Activated CD8-positive, alpha-beta T cell treated with anti-CD3 and anti-CD28 coated beads, Interleukin-2, amount 10 ng/mL, durations not matched to agents 7 days and 5 days (primary cell): ENCODE measurements at regions of chr3 and their contacts with region 1.

Region 1: DNA sequence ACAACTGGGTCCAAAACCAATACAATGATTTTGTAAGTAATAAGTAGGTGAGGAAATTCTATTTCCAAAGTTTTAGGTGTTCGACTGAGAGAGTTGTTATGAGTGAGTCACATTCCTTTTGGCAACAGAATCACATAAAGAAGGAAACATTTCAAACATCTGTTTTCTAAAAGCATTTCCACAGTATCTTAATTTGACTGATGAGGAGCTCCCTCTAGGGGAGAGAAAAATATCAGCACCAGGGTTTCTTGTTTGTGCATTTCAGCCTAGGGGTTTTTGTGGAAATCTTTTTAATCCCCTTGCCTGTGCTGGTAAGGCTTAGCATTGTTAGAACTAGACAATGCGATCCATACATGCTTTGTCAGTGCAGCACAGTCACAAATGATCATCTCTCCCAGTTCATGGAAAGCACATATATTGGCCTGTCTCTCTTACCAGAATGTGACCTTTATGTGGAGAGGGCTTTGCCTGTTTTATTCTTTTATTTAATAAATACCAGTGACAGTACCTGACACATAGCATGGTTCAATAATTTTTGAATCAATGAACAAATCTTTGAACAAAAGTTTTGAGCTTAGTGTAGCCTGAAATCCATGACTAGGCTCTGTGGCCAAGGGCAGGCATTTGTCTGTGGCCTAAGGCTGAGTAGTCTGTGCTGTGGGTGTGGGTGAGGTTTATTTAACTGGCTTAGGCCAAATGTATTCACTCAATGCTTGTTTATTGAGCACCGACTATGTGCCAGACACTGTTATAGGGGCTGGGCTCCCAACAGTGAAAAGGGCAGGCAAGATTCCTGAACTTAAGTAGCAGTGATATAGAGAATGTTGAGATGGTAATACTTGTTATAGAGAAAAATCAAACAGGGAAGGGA is 21.1 kb upstream of the IQCF6 start:
- DNase-seq: peak; percentile 63
- ATAC-seq: peak; percentile 52
- H3K4me3 Mint-ChIP-seq: no peak overlapping the region
- H3K27ac Mint-ChIP-seq: no peak overlapping the region
- H3K4me1 Mint-ChIP-seq: peaks cover 48% of the 10 kb centered on the region
- H3K27me3 Mint-ChIP-seq: peaks cover 10% of the 10 kb centered on the region

Region 2: GRCh38 chr3:51734572-51734907 is 65.6 kb before region 1 on chr3:
- CTCF ChIA-PET with region 1: interaction called, 11 read pairs
- POLR2A ChIA-PET with region 1: no interaction called
- DNase-seq: peak; percentile 70
- ATAC-seq: peak; percentile 94
- H3K4me3 Mint-ChIP-seq: peak overlapping the region; percentile 17
- H3K27ac Mint-ChIP-seq: peak overlapping the region; percentile 67
- H3K4me1 Mint-ChIP-seq: peaks cover 33% of the 10 kb centered on the region
- H3K27me3 Mint-ChIP-seq: peaks cover 9% of the 10 kb centered on the region

Region 3: DNA sequence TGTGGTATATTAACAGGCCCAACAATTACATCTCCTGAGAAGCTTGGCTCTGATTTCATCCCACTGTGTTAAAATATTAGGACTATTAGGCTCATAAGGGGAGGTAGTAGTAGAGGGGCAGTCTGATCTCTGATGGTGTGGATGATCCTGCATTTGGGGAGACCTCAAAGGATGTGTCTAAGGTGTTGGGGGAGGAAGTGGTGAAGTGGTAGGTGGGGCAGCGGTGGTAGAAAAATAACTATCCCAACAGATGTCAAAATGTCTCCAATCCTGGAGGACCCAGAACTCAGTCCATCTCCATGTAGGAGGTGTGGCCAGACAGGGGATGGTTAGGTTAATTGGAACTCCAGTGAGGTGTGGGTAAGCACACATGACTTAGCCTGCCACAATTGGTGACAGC is 10.7 kb before region 1 on chr3:
- CTCF ChIA-PET with region 1: interaction called, 13 read pairs
- POLR2A ChIA-PET with region 1: no interaction called
- DNase-seq: peak; percentile 37
- ATAC-seq: peak; percentile 60
- H3K4me3 Mint-ChIP-seq: no peak overlapping the region
- H3K27ac Mint-ChIP-seq: peak overlapping the region; percentile 33
- H3K4me1 Mint-ChIP-seq: peaks cover 28% of the 10 kb centered on the region
- H3K27me3 Mint-ChIP-seq: peaks cover 19% of the 10 kb centered on the region